ENCODE measurements at regions of chr20 and their contacts with region 1.

Region 1: GRCh38 chr20:51695574-51696303 is 72.5 kb downstream of the ATP9A start:
- DNase-seq: peak; percentile 95
- ATAC-seq: peak; percentile 89
- H3K4me3 ChIP-seq: peak overlapping the region; percentile 50
- H3K27ac ChIP-seq: peak overlapping the region; percentile 90
- H3K4me1 ChIP-seq: peaks cover 36% of the 10 kb centered on the region
- H3K27me3 ChIP-seq: no peaks in the 10 kb centered on the region
- CTCF ChIP-seq: no peak

Region 2: GRCh38 chr20:51661609-51662178 is 34.0 kb before region 1 on chr20:
- CTCF ChIA-PET with region 1: interaction called, 11 read pairs
- POLR2A ChIA-PET with region 1: interaction called, 19 read pairs
- intact Hi-C with region 1: loop called (anchors 1 kb)
- DNase-seq: peak; percentile 99
- ATAC-seq: peak; percentile 60
- H3K4me3 ChIP-seq: no peak overlapping the region
- H3K27ac ChIP-seq: peak overlapping the region; percentile 88
- H3K4me1 ChIP-seq: peaks cover 55% of the 10 kb centered on the region
- H3K27me3 ChIP-seq: no peaks in the 10 kb centered on the region
- CTCF ChIP-seq: no peak

Region 3: DNA sequence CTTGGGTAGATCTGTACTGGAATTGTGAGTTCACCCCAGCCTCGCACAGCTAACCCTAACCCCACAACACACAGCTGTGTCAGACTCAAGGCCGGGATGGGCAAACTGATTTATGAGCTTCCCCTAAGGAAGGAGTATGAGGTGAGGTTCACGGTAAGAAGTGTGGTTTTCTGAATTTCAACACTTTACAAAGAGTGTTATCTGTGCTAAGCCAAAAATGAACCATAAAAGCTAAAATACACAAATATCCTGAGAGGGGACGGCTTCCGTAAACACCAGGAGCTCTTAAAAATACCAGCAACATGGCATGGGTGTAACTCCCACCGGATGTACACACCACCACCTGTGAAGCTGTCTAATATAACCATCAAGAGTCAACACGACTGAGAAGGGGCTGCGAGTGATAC is 28.7 kb before region 1 on chr20:
- CTCF ChIA-PET with region 1: interaction called, 14 read pairs
- POLR2A ChIA-PET with region 1: interaction called, 19 read pairs
- intact Hi-C with region 1: no loop called
- DNase-seq: peak; percentile 81
- ATAC-seq: peak; percentile 61
- H3K4me3 ChIP-seq: no peak overlapping the region
- H3K27ac ChIP-seq: peak overlapping the region; percentile 89
- H3K4me1 ChIP-seq: peaks cover 42% of the 10 kb centered on the region
- H3K27me3 ChIP-seq: no peaks in the 10 kb centered on the region
- CTCF ChIP-seq: no peak

Region 4: GRCh38 chr20:51678026-51678697 is 17.6 kb before region 1 on chr20:
- CTCF ChIA-PET with region 1: no interaction called
- POLR2A ChIA-PET with region 1: no interaction called
- intact Hi-C with region 1: no loop called
- DNase-seq: no peak
- ATAC-seq: no peak
- H3K4me3 ChIP-seq: no peak overlapping the region
- H3K27ac ChIP-seq: no peak overlapping the region
- H3K4me1 ChIP-seq: no peaks in the 10 kb centered on the region
- H3K27me3 ChIP-seq: no peaks in the 10 kb centered on the region
- CTCF ChIP-seq: no peak

Region 5: DNA sequence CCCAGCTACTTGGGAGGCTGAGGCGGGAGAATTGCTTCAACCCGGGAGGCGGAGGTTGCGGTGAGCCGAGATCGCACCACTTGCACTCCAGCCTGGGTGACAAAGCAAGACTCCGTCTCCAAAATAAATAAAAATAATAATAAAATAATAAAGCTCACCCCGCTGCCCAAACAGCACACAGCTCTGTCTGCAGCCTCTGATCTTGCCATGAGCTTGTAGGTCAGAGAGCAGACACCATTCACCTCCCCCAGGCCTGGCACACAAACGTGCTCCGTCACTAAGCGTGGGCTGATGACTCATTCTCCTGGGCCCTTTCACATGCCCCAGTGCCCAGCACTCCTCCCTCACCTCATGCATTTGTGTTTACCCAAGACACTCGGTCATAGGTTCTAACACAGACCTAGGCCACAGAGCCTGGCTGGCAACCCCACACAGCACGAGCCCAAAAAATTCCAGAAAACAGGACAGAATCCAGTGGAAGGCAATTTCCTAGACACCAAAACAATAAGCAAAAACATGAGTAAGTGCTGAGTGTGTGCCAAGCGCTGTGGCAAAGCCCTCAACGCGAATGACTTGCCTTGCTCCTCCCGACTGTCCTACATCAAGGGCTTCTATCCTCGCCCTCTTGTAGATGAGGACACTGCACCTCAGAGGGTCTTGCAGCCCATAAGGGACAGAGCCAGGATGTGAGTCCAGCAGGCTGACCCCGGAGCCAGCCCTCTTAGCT is 54.5 kb after region 1 on chr20:
- CTCF ChIA-PET with region 1: interaction called, 5 read pairs
- POLR2A ChIA-PET with region 1: interaction called, 7 read pairs
- intact Hi-C with region 1: loop called (anchors 2 kb)
- DNase-seq: peak; percentile 100
- ATAC-seq: peak; percentile 87
- H3K4me3 ChIP-seq: peak overlapping the region; percentile 31; the same call in 1 of the 2 replicates
- H3K27ac ChIP-seq: peak overlapping the region; percentile 87
- H3K4me1 ChIP-seq: peaks cover 58% of the 10 kb centered on the region
- H3K27me3 ChIP-seq: no peaks in the 10 kb centered on the region
- CTCF ChIP-seq: no peak

Region 6: GRCh38 chr20:51767010-51767558 is 71.3 kb after region 1 on chr20:
- CTCF ChIA-PET with region 1: interaction called, 4 read pairs
- POLR2A ChIA-PET with region 1: interaction called, 4 read pairs
- intact Hi-C with region 1: loop called (anchors 2 kb)
- DNase-seq: peak; percentile 97
- ATAC-seq: peak; percentile 95
- H3K4me3 ChIP-seq: peak overlapping the region; percentile 91
- H3K27ac ChIP-seq: peak overlapping the region; percentile 76
- H3K4me1 ChIP-seq: peaks cover 9% of the 10 kb centered on the region
- H3K27me3 ChIP-seq: no peaks in the 10 kb centered on the region
- CTCF ChIP-seq: no peak

Region 7: GRCh38 chr20:52031563-52032303 is 336.0 kb after region 1 on chr20:
- CTCF ChIA-PET with region 1: no interaction called
- POLR2A ChIA-PET with region 1: no interaction called
- intact Hi-C with region 1: no loop called
- DNase-seq: peak; percentile 37
- ATAC-seq: no peak; the same call in 1 of the 2 replicates
- H3K4me3 ChIP-seq: no peak overlapping the region
- H3K27ac ChIP-seq: no peak overlapping the region
- H3K4me1 ChIP-seq: no peaks in the 10 kb centered on the region
- H3K27me3 ChIP-seq: no peaks in the 10 kb centered on the region
- CTCF ChIP-seq: no peak

Region 8: GRCh38 chr20:52083627-52084232 is 388.0 kb after region 1 on chr20:
- CTCF ChIA-PET with region 1: interaction called, 3 read pairs
- POLR2A ChIA-PET with region 1: interaction called, 3 read pairs
- intact Hi-C with region 1: loop called (anchors 2 kb)
- DNase-seq: peak; percentile 92
- ATAC-seq: peak; percentile 90
- H3K4me3 ChIP-seq: no peak overlapping the region
- H3K27ac ChIP-seq: no peak overlapping the region
- H3K4me1 ChIP-seq: peaks cover 16% of the 10 kb centered on the region
- H3K27me3 ChIP-seq: no peaks in the 10 kb centered on the region
- CTCF ChIP-seq: peak; percentile 99

Measured in PC-3 (cell line).